ENCODE measurements at regions of chr11 and their contacts with region 1.

Region 1: GRCh38 chr11:11923828-11924227 is 82.1 kb downstream of the USP47 start:
- DNase-seq: no peak
- H3K4me3 ChIP-seq: no peak overlapping the region
- H3K27ac ChIP-seq: no peak overlapping the region
- H3K4me1 ChIP-seq: no peaks in the 10 kb centered on the region
- H3K27me3 ChIP-seq: no peaks in the 10 kb centered on the region
- CTCF ChIP-seq: no peak
- POLR2A ChIP-seq: no peak

Region 2: GRCh38 chr11:12281571-12282478 is 358.0 kb after region 1 on chr11:
- intact Hi-C with region 1: loop called (anchors 10 kb)
- DNase-seq: peak; percentile 86
- H3K4me3 ChIP-seq: no peak overlapping the region
- H3K27ac ChIP-seq: peak overlapping the region in 1 of 3 donors; percentile 84
- H3K4me1 ChIP-seq: peaks cover 13 to 14% of the 10 kb centered on the region in 2 donors
- H3K27me3 ChIP-seq: no peaks in the 10 kb centered on the region
- CTCF ChIP-seq: peak; percentile 91 to 99 (median 97)
- POLR2A ChIP-seq: no peak

Region 3: GRCh38 chr11:12389643-12390306 is 465.9 kb after region 1 on chr11:
- intact Hi-C with region 1: no loop called
- DNase-seq: no peak
- H3K4me3 ChIP-seq: no peak overlapping the region
- H3K27ac ChIP-seq: no peak overlapping the region
- H3K4me1 ChIP-seq: peaks cover 0 to 10% of the 10 kb centered on the region in 2 donors
- H3K27me3 ChIP-seq: no peaks in the 10 kb centered on the region
- CTCF ChIP-seq: no peak
- POLR2A ChIP-seq: no peak

Measured in thyroid gland (tissue), 4 donors.